CD14-positive monocyte (primary cell): ENCODE measurements at regions of chr22 and their contacts with region 1.

Region 1: DNA sequence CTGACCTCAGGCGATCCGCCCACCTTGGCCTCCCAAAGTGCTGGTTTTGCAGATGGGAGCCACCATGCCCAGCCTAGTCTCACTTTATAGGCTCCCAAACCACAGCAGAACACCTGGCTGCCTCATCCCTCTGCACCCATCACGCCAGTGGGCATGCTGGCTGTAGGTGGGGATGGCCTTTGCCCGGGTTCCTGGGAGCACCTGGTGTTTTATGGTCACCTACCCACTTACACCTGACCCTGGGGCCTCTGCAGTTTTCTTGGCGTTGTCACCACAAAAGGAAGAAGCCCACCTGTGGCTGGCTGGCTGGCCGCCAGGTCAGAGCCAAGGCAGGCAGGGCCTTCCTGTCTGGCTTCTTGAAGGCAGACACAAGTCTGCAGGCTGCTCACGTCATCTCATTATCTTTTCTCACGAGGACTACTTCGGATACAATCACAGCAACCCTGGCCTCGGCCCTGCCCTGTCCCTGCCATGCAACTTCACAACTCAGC is 8.2 kb downstream of the RRP7A start:
- DNase-seq: no peak
- H3K4me3 ChIP-seq: no peak overlapping the region
- H3K4me3 Mint-ChIP-seq: no peak overlapping the region
- H3K27ac ChIP-seq: no peak overlapping the region
- H3K27ac Mint-ChIP-seq: peak overlapping the region in 1 of 7 donors; percentile 46
- H3K4me1 ChIP-seq: no peaks in the 10 kb centered on the region
- H3K4me1 Mint-ChIP-seq: peaks cover 6% of the 10 kb centered on the region
- H3K27me3 ChIP-seq: no peaks in the 10 kb centered on the region
- H3K27me3 Mint-ChIP-seq: no peaks in the 10 kb centered on the region
- CTCF ChIP-seq: no peak

Region 2: GRCh38 chr22:42388130-42388797 is 123.2 kb before region 1 on chr22:
- intact Hi-C with region 1: no loop called
- DNase-seq: no peak
- H3K4me3 ChIP-seq: no peak overlapping the region
- H3K4me3 Mint-ChIP-seq: no peak overlapping the region
- H3K27ac ChIP-seq: no peak overlapping the region
- H3K27ac Mint-ChIP-seq: no peak overlapping the region
- H3K4me1 ChIP-seq: no peaks in the 10 kb centered on the region
- H3K4me1 Mint-ChIP-seq: no peaks in the 10 kb centered on the region
- H3K27me3 ChIP-seq: no peaks in the 10 kb centered on the region
- H3K27me3 Mint-ChIP-seq: peaks cover 0 to 1% (median 0%) of the 10 kb centered on the region in 3 donors
- CTCF ChIP-seq: no peak

Region 3: DNA sequence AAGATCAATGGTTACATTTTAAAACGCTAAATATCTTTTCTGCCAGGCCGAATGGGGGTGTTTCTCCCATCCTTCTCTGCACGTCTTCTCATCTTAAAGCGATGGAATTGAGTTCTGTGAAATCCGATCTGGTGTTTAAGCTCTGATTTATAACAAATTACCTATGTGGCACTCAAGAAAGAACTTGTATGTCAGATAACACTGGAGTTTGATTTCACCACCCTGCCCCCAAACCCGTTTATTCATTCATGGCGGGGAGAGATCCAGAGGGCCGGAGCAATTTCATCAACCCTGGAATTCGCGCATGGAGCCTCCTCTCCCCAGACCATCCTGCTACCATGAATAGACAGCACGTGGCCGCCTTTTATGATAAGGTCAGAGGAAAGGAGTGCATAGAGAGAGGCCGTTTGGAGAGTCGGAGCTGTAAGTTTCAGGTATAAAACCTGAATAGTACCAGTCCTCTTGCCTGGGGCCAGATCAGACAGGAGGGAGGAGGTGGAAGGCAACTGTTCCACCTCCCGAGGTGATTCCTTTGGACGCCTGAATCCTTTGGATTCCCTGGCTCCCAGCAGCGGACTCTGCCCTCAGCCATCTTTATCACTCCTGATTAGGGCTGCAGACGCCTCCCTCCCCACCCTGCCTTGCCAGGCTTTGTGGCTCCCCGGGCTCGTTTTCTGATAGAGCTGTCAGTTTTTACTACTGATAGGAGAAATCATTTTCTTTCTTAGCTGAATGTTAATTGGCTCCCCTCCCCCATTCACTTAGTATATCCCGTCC is 52.0 kb before region 1 on chr22:
- intact Hi-C with region 1: loop called in 1 of 2 experiments (anchors 10 kb)
- DNase-seq: no peak
- H3K4me3 ChIP-seq: no peak overlapping the region
- H3K4me3 Mint-ChIP-seq: no peak overlapping the region
- H3K27ac ChIP-seq: no peak overlapping the region
- H3K27ac Mint-ChIP-seq: no peak overlapping the region
- H3K4me1 ChIP-seq: no peaks in the 10 kb centered on the region
- H3K4me1 Mint-ChIP-seq: no peaks in the 10 kb centered on the region
- H3K27me3 ChIP-seq: peaks cover 0 to 11% of the 10 kb centered on the region in 2 donors
- H3K27me3 Mint-ChIP-seq: peaks cover 27 to 32% (median 29%) of the 10 kb centered on the region in 3 donors
- CTCF ChIP-seq: no peak

Region 4: GRCh38 chr22:42500161-42500835 is 11.1 kb before region 1 on chr22:
- intact Hi-C with region 1: no loop called
- DNase-seq: peak; percentile 75 to 87 (median 86)
- H3K4me3 ChIP-seq: peak overlapping the region; percentile 15 to 70 (median 38)
- H3K4me3 Mint-ChIP-seq: peak overlapping the region; percentile 59 to 68
- H3K27ac ChIP-seq: no peak overlapping the region
- H3K27ac Mint-ChIP-seq: peak overlapping the region in 1 of 7 donors; percentile 26
- H3K4me1 ChIP-seq: peaks cover 15 to 20% of the 10 kb centered on the region in 2 donors
- H3K4me1 Mint-ChIP-seq: peaks cover 21% of the 10 kb centered on the region
- H3K27me3 ChIP-seq: no peaks in the 10 kb centered on the region
- H3K27me3 Mint-ChIP-seq: peaks cover 1 to 4% (median 3%) of the 10 kb centered on the region in 3 donors
- CTCF ChIP-seq: no peak

Region 5: DNA sequence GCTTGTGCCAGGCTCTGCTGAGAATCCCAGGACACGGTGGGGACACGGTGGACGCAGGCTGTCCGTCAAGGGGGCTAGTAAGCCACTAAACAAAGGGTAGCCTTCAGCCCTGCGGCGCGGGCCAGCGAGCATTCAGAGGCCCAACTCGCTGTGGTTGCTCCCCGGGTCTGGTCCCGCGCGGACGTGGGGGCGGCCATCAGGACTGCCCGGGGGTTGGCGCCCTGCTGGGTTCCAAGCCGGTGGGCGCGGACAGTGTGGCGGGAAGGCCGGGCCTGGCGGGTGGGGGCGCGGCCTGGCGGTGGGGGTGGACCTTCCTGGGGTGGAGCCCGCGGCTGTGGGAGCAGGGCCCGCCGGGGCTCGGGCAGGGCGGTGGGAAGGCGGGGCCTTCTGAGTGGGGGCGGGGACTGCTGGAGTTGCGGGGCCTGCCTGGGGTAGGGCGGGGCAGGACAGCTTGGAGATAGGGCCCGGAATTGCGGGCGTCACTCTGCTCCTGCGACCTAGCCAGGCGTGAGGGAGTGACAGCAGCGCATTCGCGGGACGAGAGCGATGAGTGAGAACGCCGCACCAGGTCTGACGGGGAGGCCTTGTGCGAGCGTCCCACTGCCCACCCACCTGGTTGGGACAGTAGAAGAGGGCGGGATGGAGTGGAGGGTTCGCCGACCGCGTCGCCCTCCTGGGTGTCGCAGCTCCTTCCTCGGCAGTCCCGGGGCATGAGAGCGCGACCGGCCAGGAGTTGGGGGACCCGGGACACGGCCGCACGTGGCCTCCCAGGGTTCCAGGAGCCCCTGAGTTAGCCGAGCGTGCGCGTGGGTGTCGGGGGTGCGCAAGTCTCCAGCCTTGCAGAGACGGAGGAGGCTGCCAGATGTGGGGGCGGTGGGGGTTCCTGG is 42.3 kb after region 1 on chr22 and contains the start of gene SERHL2:
- intact Hi-C with region 1: loop called in 1 of 2 experiments (anchors 5 kb)
- DNase-seq: peak; percentile 60 to 73 (median 71)
- H3K4me3 ChIP-seq: peak within 1 kb of the TSS; percentile 21 to 72 (median 47)
- H3K4me3 Mint-ChIP-seq: peak within 1 kb of the TSS; percentile 85 to 89
- H3K27ac ChIP-seq: no peak within 1 kb of the TSS
- H3K27ac Mint-ChIP-seq: peak within 1 kb of the TSS in 2 of 7 donors; percentile 46 to 65
- H3K4me1 ChIP-seq: peaks cover 12 to 13% of the 10 kb centered on the region in 2 donors
- H3K4me1 Mint-ChIP-seq: peaks cover 21% of the 10 kb centered on the region
- H3K27me3 ChIP-seq: peaks cover 2 to 19% of the 10 kb centered on the region in 2 donors
- H3K27me3 Mint-ChIP-seq: peaks cover 18 to 29% (median 28%) of the 10 kb centered on the region in 3 donors
- CTCF ChIP-seq: no peak
- polyA plus RNA-seq, gene SERHL2: 0.20 to 0.60 (median 0.24) TPM

Region 6: DNA sequence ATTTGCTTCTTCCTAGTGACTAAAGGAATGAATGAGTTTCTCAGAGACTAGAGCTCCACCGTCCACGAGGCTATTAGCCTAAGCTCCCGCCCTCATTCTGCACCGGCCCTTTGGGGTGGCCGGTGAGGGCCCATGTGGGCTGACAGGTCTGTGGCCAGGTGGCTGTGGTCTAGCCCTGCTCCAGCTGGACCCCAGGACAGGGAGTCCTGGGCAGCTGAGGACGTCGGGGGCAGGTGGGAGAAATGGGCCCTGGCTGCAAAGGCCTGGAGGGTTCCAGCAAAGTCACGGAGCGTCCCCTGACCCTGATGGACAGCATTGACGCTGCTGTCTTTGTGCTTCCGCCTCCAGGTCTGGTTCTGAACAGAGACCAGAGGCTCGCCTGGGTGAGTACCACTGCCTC is 54.5 kb after region 1 on chr22:
- intact Hi-C with region 1: loop called in 1 of 2 experiments (anchors 5 kb)
- DNase-seq: no peak
- H3K4me3 ChIP-seq: no peak overlapping the region
- H3K4me3 Mint-ChIP-seq: no peak overlapping the region
- H3K27ac ChIP-seq: no peak overlapping the region
- H3K27ac Mint-ChIP-seq: no peak overlapping the region
- H3K4me1 ChIP-seq: peaks cover 9 to 10% of the 10 kb centered on the region in 2 donors
- H3K4me1 Mint-ChIP-seq: peaks cover 10% of the 10 kb centered on the region
- H3K27me3 ChIP-seq: no peaks in the 10 kb centered on the region
- H3K27me3 Mint-ChIP-seq: peaks cover 0 to 3% (median 1%) of the 10 kb centered on the region in 3 donors
- CTCF ChIP-seq: no peak